ENCODE measurements at regions of chr9 and their contacts with region 1.

Region 1: DNA sequence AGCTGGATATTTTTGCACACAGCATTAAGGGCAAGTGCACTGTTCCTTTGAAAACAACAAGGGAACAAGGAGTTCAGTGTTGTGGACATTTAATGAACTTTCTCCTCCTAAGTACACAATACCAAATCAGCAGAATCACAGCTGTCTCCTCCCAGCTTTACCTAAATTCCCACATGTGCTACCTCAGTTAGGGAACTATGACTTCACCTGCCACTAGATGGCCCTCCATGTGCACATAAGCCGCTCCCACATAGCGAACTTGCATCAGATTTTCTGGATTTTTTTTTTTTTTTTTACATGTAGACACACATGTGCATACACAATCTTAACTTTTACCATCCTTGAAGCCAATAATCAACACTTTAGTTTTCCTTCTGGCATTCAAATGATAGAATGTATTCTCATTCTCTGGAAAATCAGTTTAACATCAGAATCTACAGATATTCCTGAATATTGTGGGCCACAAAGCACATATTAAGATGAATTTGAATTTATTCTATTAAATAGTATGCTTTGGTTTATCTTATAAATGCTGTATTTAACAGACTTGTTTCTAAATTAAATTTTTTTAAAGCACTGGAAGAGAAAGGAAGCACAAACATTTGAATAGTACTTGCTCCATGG is 123.6 kb downstream of the PALM2AKAP2 start:
- DNase-seq: peak; percentile 66 to 73
- H3K4me3 ChIP-seq: no peak overlapping the region
- H3K4me1 ChIP-seq: no peaks in the 10 kb centered on the region
- H3K27me3 ChIP-seq: no peaks in the 10 kb centered on the region

Region 2: DNA sequence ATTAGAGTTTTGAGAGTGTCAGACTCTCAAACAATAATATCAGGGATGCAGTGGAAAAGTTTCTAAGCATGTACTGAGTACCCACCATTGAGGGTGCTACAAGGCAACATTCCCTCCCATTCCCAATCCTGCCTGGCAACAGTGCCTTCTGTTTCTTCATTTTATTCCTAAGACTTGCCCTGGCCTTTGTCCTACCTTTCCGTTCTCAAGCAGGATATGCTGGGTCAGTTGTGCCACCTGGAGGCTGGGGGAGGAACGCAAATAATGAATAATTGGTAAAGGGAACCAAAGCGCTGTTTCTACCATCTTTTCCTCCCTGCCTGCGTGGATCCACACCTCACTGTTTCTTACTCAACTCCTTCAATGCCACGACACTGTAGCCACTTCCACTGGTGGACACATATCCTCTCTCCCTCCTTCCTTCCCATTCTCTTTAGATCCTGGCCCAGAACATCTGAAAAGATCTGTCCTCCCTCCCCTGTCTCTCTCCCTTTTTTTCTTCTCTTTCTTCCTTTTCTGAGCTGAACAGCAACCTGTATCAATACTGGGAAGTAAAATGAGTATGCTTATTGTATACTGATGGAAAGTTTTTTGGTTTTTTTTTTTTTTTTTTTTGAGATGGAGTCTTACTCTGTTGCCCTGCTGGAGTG is 154.8 kb after region 1 on chr9:
- in situ Hi-C with region 1: loop called (anchors 5 kb)
- DNase-seq: peak; percentile 61 to 75
- H3K4me3 ChIP-seq: no peak overlapping the region
- H3K4me1 ChIP-seq: 0 out of 2 replicates have a peak, but pooled peaks cover 5% of the 10 kb centered on the region
- H3K27me3 ChIP-seq: no peaks in the 10 kb centered on the region

Region 3: GRCh38 chr9:110152704-110153374 is 249.2 kb after region 1 on chr9:
- in situ Hi-C with region 1: loop called (anchors 5 kb)
- DNase-seq: peak; percentile 46 to 50
- H3K4me3 ChIP-seq: no peak overlapping the region
- H3K4me1 ChIP-seq: no peaks in the 10 kb centered on the region
- H3K27me3 ChIP-seq: no peaks in the 10 kb centered on the region

Measured in HAP-1 (cell line).